ENCODE measurements at regions of chr13 and their contacts with region 1.

Region 1: DNA sequence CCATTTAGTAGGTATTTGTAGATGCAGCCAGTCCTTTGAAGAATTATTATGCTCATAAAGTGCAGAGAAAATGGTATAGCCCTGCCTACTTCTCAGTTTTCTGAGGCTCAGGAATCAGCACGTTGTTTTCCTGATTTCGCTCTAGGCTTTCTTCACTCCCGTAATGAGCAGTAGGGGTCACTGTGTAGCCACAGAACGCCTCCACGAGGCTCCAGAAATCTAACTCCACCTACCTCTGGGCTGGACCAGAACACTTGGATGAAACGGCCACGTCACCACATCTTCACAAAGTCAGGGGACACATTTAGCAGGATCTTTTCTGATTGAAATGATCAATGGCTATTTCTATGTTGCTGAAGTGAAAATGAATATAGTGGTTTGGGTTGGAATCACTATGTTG is 49.8 kb upstream of the GTF3A start:
- DNase-seq: peak; percentile 86
- H3K4me3 Mint-ChIP-seq: no peak overlapping the region
- H3K27ac Mint-ChIP-seq: no peak overlapping the region
- H3K4me1 Mint-ChIP-seq: no peaks in the 10 kb centered on the region
- H3K27me3 Mint-ChIP-seq: peaks cover 10% of the 10 kb centered on the region
- CTCF ChIP-seq: peak; percentile 66

Region 2: GRCh38 chr13:27035982-27036981 is 338.4 kb before region 1 on chr13:
- CTCF ChIA-PET with region 1: no interaction called
- POLR2A ChIA-PET with region 1: no interaction called
- intact Hi-C with region 1: no loop called
- DNase-seq: peak; percentile 38
- H3K4me3 Mint-ChIP-seq: no peak overlapping the region
- H3K27ac Mint-ChIP-seq: no peak overlapping the region
- H3K4me1 Mint-ChIP-seq: peaks cover 25% of the 10 kb centered on the region
- H3K27me3 Mint-ChIP-seq: no peaks in the 10 kb centered on the region
- CTCF ChIP-seq: no peak

Region 3: GRCh38 chr13:27406178-27406939 is 31.7 kb after region 1 on chr13:
- CTCF ChIA-PET with region 1: interaction called, 20 read pairs
- POLR2A ChIA-PET with region 1: no interaction called
- intact Hi-C with region 1: no loop called
- DNase-seq: peak; percentile 55
- H3K4me3 Mint-ChIP-seq: no peak overlapping the region
- H3K27ac Mint-ChIP-seq: no peak overlapping the region
- H3K4me1 Mint-ChIP-seq: no peaks in the 10 kb centered on the region
- H3K27me3 Mint-ChIP-seq: peaks cover 45% of the 10 kb centered on the region
- CTCF ChIP-seq: peak; percentile 45

Region 4: GRCh38 chr13:27424246-27425157 is 49.9 kb after region 1 on chr13 and contains the start of gene GTF3A:
- CTCF ChIA-PET with region 1: interaction called, 18 read pairs
- POLR2A ChIA-PET with region 1: interaction called, 3 read pairs
- intact Hi-C with region 1: loop called (anchors 2 kb)
- DNase-seq: peak; percentile 84
- H3K4me3 Mint-ChIP-seq: peak within 1 kb of the TSS; percentile 75
- H3K27ac Mint-ChIP-seq: peak within 1 kb of the TSS; percentile 57
- H3K4me1 Mint-ChIP-seq: peaks cover 29% of the 10 kb centered on the region
- H3K27me3 Mint-ChIP-seq: no peaks in the 10 kb centered on the region
- CTCF ChIP-seq: no peak
- total RNA-seq, gene GTF3A: 124 and 159 TPM in 2 replicates

Region 5: DNA sequence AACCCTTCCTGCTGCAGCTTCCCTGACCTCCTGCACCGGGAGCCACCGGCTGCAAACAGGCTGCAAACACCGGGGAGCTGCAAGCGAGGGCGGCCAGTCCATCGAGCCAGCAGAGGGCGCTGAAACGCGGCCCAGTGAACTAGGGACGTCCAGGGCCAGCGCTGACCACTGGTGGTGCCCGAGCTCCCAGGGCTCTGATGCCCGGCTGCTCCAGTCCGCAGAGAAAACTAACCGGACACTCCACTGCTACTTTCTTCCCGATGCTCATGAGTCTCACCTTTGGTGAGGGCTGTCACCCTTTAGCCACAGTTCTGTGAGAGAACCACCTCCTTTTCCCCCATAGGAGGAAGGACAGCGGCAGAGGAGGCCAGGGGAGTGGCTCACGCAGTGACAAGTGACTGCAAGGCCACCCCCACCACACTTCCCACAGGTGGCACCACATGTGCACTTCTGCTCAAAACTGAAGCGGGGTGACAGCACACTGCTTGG is 158.5 kb after region 1 on chr13:
- CTCF ChIA-PET with region 1: no interaction called
- POLR2A ChIA-PET with region 1: no interaction called
- intact Hi-C with region 1: loop called (anchors 5 kb)
- DNase-seq: peak; percentile 74
- H3K4me3 Mint-ChIP-seq: no peak overlapping the region
- H3K27ac Mint-ChIP-seq: no peak overlapping the region
- H3K4me1 Mint-ChIP-seq: peaks cover 8% of the 10 kb centered on the region
- H3K27me3 Mint-ChIP-seq: no peaks in the 10 kb centered on the region
- CTCF ChIP-seq: peak; percentile 80

Region 6: GRCh38 chr13:27953676-27954405 is 579.2 kb after region 1 on chr13:
- CTCF ChIA-PET with region 1: interaction called, 11 read pairs
- POLR2A ChIA-PET with region 1: no interaction called
- intact Hi-C with region 1: loop called (anchors 10 kb)
- DNase-seq: peak; percentile 70
- H3K4me3 Mint-ChIP-seq: peak overlapping the region; percentile 37
- H3K27ac Mint-ChIP-seq: peak overlapping the region; percentile 62
- H3K4me1 Mint-ChIP-seq: no peaks in the 10 kb centered on the region
- H3K27me3 Mint-ChIP-seq: no peaks in the 10 kb centered on the region
- CTCF ChIP-seq: peak; percentile 96

Region 7: DNA sequence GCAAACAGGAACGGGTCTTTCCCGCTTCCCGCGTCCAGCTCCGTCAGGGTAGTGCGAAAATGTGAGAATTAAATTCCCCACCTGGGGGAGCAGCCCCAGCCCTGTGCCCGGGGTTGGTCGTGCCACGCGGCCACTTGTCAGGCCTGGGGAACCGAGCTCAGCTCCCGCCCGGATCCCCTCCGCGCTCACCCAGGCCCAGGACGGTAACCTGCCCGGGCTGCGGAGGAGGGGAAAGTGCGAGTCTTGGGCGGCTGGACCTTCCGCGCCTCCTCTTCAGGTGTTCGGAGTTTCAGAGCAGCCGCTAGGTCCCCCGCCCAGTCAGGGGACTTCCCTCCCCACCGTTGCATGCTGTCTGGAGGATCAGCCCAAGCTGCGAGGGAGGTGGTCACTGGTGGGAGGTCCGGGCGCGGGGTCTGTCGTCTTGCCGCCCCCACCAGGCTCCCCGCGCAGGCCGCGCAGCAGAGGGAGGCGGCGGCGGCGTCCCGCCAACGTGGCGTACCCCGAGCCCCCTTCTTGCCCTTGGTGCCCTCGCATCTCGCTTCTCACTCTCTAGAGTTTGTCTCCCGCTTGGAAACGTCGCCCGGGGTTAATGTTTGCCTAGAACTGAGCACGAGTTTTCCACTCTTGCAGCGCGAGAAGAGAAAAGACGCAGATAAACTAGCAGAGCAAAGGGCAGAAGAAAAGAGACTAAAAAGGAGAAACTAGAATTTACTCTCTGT is 605.8 kb after region 1 on chr13:
- CTCF ChIA-PET with region 1: interaction called, 19 read pairs
- POLR2A ChIA-PET with region 1: no interaction called
- intact Hi-C with region 1: loop called (anchors 1 kb)
- DNase-seq: no peak
- H3K4me3 Mint-ChIP-seq: no peak overlapping the region
- H3K27ac Mint-ChIP-seq: no peak overlapping the region
- H3K4me1 Mint-ChIP-seq: peaks cover 7% of the 10 kb centered on the region
- H3K27me3 Mint-ChIP-seq: peaks cover 77% of the 10 kb centered on the region
- CTCF ChIP-seq: no peak

Region 8: GRCh38 chr13:27988520-27988919 is 613.9 kb after region 1 on chr13 and contains the start of gene URAD:
- CTCF ChIA-PET with region 1: interaction called, 19 read pairs
- POLR2A ChIA-PET with region 1: no interaction called
- intact Hi-C with region 1: loop called (anchors 1 kb)
- DNase-seq: no peak
- H3K4me3 Mint-ChIP-seq: no peak within 1 kb of the TSS
- H3K27ac Mint-ChIP-seq: no peak within 1 kb of the TSS
- H3K4me1 Mint-ChIP-seq: no peaks in the 10 kb centered on the region
- H3K27me3 Mint-ChIP-seq: peaks cover 14% of the 10 kb centered on the region
- CTCF ChIP-seq: no peak
- total RNA-seq, gene URAD: not detected in 2 replicates